Mammary epithelial cell (primary cell): ENCODE measurements at regions of chr13 and their contacts with region 1.

Region 1: DNA sequence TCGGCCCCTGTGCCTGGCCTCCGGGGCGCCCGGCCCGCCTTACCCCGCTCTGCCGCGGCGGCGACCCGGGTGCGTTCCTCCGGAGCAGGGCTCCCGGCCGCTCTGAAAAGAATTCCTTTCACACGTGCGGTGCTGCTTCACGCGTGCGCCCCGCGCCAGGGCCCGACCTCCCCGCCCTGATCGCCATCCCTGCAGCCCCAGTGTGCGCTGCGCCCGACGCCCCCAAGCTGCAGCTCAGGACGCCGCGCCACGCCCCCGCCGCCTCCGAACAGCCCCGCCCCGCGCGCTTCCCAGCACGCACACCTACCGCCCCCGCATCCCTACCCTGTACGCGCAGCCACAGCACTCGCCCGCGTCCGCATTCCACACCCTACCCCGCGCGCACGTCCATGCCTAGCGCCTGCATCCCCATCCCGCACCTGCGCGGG is at the start of gene GJA3:
- DNase-seq: peak; percentile 60
- H3K4me3 ChIP-seq: peak within 1 kb of the TSS; percentile 68 to 79 (median 70)
- H3K27ac ChIP-seq: no peak within 1 kb of the TSS
- H3K4me1 ChIP-seq: peaks cover 16% of the 10 kb centered on the region
- H3K27me3 ChIP-seq: no peaks in the 10 kb centered on the region
- CTCF ChIP-seq: no peak
- total RNA-seq, gene GJA3: 2.8 to 4.2 TPM

Region 2: DNA sequence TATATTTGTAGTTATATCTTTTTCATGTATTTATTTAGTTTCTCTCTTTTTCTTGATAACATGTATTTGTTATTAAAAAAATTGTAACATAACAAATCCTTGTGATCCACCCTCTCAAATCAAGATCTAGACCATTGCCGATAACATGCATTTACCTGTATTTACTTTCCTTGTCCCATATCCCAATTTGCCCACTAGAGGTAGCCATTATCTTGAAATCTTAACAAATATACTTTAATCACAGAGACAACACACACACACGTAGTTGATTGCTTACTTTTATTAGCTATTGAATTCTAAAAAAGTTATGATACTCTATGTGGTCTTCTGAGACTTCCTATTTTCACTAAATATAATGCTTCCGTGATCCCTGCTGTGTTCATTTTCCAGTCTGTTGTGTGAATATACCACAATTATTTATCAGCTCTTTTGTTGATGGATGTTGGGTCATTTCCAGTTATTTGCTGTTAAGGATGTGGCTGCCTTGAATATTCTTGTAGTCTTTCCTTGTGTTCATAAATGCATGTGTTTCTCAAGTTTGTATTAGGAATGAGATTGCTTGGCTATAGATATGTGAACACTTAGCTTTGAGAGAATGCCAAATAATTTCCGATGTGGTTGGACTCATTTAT is 233.6 kb before region 1 on chr13:
- CTCF ChIA-PET with region 1: no interaction called
- dilution Hi-C with region 1: no loop called
- in situ Hi-C with region 1: no loop called
- intact Hi-C with region 1: loop called (anchors 1 kb)
- DNase-seq: peak; percentile 38
- H3K4me3 ChIP-seq: no peak overlapping the region
- H3K27ac ChIP-seq: no peak overlapping the region
- H3K4me1 ChIP-seq: no peaks in the 10 kb centered on the region
- H3K27me3 ChIP-seq: no peaks in the 10 kb centered on the region
- CTCF ChIP-seq: peak; percentile 64 to 73

Region 3: DNA sequence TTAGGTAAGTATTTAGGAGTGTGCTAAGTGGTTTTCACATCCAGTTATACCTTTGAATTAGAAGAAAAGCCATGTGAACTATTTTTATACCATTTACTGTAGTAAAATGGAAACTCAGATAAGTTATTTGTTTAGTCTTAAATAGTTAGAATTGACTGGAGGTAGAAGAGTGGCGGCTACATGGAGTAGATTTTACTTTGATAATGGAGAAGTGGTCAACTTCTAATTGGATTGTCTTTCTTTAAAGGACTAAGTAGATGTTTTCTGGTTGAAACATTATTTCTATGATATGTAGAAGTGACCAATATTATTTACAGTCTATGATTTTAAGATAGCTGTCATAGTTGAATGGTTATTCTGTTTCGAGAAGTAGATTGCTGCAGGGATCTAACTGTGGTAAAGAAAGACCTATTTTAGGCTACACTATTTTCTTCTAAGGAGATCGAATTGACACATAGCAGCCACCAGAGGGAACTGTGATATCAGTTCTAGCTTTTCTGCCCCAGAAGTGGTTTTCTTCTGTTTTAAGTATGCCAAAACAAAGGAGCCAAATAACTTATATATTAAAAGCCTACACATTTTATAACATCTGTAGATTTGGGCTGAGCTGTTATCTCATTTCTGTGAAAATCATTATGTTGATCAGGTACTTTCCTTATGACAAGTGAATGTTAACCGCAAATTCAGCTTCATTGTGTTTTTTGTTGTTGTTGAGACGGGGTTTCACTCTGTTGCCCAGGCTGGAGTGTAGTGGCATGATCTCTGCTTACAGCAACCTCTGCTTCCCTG is 176.2 kb before region 1 on chr13:
- CTCF ChIA-PET with region 1: interaction called, 7 read pairs
- dilution Hi-C with region 1: no loop called
- in situ Hi-C with region 1: no loop called
- intact Hi-C with region 1: loop called (anchors 1 kb)
- DNase-seq: peak; percentile 7
- H3K4me3 ChIP-seq: no peak overlapping the region
- H3K27ac ChIP-seq: no peak overlapping the region
- H3K4me1 ChIP-seq: no peaks in the 10 kb centered on the region
- H3K27me3 ChIP-seq: no peaks in the 10 kb centered on the region
- CTCF ChIP-seq: peak; percentile 52 to 66

Region 4: GRCh38 chr13:20090349-20090748 is 70.5 kb before region 1 on chr13:
- CTCF ChIA-PET with region 1: no interaction called
- dilution Hi-C with region 1: no loop called
- in situ Hi-C with region 1: no loop called
- intact Hi-C with region 1: loop called (anchors 1 kb)
- DNase-seq: no peak
- H3K4me3 ChIP-seq: no peak overlapping the region
- H3K27ac ChIP-seq: no peak overlapping the region
- H3K4me1 ChIP-seq: no peaks in the 10 kb centered on the region
- H3K27me3 ChIP-seq: no peaks in the 10 kb centered on the region
- CTCF ChIP-seq: peak in 1 of 2 donors; percentile 31

Region 5: DNA sequence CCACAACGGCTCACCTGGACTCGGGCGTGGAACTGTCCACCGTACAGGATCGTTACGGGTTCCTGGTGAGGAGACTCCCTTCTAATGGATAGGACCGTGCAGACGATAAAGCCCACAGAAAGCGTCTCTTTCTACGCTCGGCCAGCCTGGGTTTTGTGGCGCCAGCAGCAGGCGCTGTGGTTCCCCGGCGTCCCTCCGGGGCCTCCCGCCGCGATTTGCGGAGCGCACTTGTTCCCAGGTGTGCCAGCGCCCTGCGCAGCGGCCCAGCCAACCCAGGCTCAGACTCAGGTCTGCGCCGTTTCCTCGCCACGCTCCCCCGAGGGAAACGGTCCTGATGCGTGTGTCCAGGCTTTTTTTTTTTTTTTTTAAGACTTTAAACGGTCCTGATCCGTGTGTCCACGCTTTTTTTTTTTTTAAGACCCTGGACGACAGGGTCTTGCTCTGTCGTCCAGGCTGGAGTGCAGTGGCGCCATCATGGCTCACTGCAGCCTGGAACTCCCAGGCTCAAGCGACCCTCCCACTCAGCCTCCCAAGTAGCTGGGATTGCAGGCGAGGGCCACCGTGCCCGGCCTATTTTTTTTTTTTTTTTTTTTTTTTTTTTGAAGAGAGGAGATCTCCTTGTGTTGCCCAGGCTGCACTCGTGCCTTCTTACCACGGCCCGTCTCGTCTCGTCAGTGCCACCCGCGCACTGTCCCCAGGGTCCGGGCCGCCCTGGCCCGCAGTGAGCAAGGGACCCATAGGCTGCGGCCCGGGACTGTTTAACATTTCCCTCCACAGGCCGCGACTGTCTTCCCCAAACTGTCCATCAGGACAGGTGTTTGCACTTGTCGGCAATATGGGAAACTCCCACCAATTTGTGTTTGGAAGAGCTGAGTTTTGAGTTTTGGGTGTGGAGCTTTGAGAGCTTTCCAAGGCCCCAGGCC is 23.8 kb before region 1 on chr13:
- CTCF ChIA-PET with region 1: no interaction called
- dilution Hi-C with region 1: no loop called
- in situ Hi-C with region 1: no loop called
- intact Hi-C with region 1: no loop called
- DNase-seq: peak; percentile 14
- H3K4me3 ChIP-seq: peak overlapping the region in 1 of 3 experiments; percentile 9
- H3K27ac ChIP-seq: no peak overlapping the region
- H3K4me1 ChIP-seq: no peaks in the 10 kb centered on the region
- H3K27me3 ChIP-seq: no peaks in the 10 kb centered on the region
- CTCF ChIP-seq: peak; percentile 16 to 52